ENCODE measurements at regions of chr12 and their contacts with region 1.

Region 1: DNA sequence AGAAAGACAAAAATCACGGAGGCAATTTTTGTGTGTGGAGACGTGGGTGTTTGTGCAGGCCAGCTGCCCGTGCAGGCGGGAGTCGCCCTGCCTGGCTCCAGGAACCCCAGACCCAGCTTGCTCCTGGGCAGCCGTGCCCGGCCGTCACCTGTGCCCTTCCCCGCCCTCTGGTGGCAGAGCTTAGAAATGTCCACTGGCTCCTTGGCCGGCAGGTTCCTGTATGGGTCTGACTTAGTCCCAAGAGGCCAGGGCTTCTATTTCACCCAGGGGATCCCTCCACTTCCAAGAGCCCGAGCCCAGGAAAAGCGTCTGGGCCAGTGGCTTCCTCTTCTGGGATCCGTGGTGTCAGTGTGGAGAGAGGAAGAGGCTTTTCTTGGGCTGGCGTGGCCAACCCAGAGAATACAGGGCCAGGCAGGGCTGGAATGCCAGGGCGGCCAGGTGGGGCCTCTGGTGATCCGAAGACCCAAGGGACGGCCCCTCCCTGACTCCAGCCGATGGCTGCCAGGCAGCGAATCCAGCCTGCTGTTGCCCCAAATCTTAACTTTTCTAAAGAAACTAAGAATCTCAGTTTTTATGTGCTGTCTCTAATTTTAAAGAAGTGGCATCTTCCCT is 120.9 kb downstream of the TMEM132C start:
- DNase-seq: peak; percentile 51
- ATAC-seq: no peak
- H3K4me3 Mint-ChIP-seq: no peak overlapping the region
- H3K27ac Mint-ChIP-seq: no peak overlapping the region
- H3K4me1 Mint-ChIP-seq: no peaks in the 10 kb centered on the region
- H3K27me3 Mint-ChIP-seq: peaks cover 3% of the 10 kb centered on the region
- CTCF ChIP-seq: peak; percentile 46

Region 2: GRCh38 chr12:128259556-128260070 is 128.3 kb before region 1 on chr12:
- CTCF ChIA-PET with region 1: interaction called, 13 read pairs
- POLR2A ChIA-PET with region 1: no interaction called
- intact Hi-C with region 1: no loop called
- DNase-seq: peak; percentile 35
- ATAC-seq: no peak
- H3K4me3 Mint-ChIP-seq: no peak overlapping the region
- H3K27ac Mint-ChIP-seq: no peak overlapping the region
- H3K4me1 Mint-ChIP-seq: no peaks in the 10 kb centered on the region
- H3K27me3 Mint-ChIP-seq: peaks cover 4% of the 10 kb centered on the region
- CTCF ChIP-seq: peak; percentile 74